ENCODE measurements at regions of chr2 and their contacts with region 1.

Region 1: DNA sequence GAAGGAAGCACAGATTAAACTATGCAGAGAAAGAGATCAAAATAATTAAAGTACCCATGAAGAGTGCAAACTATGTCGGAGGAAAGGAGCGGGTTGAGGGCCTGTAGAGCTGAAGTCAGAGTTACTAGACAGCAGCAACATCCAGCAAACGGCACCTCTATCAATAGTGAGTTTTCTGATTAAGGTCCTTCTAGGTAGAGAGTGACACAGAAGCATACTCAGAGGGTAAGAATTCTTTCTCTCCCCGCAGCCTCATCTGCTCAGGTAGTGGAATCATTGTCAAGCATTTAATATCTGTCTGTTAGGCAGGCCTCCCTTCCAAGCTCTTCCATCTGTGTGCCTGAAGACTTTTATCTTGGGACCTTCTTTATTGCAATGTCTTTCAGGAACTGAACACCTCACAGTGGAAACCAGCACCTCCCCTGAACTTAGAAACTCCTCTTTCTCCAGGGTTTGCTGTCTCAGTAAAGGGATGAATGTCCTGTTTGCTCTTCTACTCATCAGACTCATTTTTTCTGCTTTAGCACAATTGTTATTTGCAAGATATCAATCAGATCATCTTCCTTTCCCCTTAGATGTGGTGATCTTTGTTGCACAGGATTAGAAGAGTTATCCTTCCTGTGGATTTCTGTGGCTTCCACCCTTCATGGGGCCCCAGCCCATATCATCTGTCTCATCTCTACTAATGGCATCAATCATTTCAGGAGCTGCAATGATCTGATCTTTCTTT is 28.8 kb downstream of the SP140 start:
- DNase-seq: peak in 8 of 9 donors; percentile 28 to 70 (median 51)
- ATAC-seq: peak; percentile 81
- H3K4me3 ChIP-seq: peak overlapping the region; percentile 5
- H3K4me3 Mint-ChIP-seq: no peak overlapping the region
- H3K27ac ChIP-seq: no peak overlapping the region
- H3K27ac Mint-ChIP-seq: no peak overlapping the region
- H3K4me1 ChIP-seq: peaks cover 18 to 24% of the 10 kb centered on the region in 2 donors
- H3K4me1 Mint-ChIP-seq: peaks cover 0 to 22% (median 9%) of the 10 kb centered on the region in 7 donors
- H3K27me3 ChIP-seq: no peaks in the 10 kb centered on the region
- H3K27me3 Mint-ChIP-seq: no peaks in the 10 kb centered on the region

Region 2: GRCh38 chr2:230225486-230225885 is 28.8 kb before region 1 on chr2 and contains the start of gene SP140:
- CTCF ChIA-PET with region 1: interaction called, 3 read pairs
- POLR2A ChIA-PET with region 1: no interaction called
- intact Hi-C with region 1: loop called (anchors 1 to 2 kb)
- DNase-seq: peak; percentile 34 to 91 (median 77)
- ATAC-seq: peak; percentile 97
- H3K4me3 ChIP-seq: peak within 1 kb of the TSS; percentile 70
- H3K4me3 Mint-ChIP-seq: peak within 1 kb of the TSS; percentile 82 to 94 (median 87)
- H3K27ac ChIP-seq: peak within 1 kb of the TSS; percentile 79
- H3K27ac Mint-ChIP-seq: peak within 1 kb of the TSS; percentile 95 to 100 (median 98)
- H3K4me1 ChIP-seq: peaks cover 21 to 39% of the 10 kb centered on the region in 2 donors
- H3K4me1 Mint-ChIP-seq: peaks cover 28 to 79% (median 65%) of the 10 kb centered on the region in 7 donors
- H3K27me3 ChIP-seq: no peaks in the 10 kb centered on the region
- H3K27me3 Mint-ChIP-seq: no peaks in the 10 kb centered on the region
- total RNA-seq, gene SP140: 34.5 to 120 (median 45.2) TPM

Region 3: DNA sequence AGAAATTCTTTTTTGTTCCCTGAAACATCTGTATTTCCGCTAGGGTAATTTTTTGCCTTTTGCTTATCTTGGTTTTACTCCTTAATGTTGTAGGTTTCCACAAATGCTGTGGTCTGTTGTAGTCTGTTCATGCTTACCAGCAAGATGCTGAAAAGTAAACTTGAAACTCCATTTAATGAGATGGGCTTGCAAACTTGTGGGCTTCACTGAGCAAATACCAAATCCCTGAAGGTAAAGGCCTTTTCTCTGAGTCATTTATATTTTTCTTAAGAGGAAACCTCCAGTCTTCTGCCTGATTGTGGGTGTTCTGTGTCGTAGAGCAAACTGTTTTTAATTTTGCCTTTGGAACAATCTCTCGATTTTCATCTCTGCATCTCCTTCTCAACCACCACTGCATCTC is 19.5 kb before region 1 on chr2:
- CTCF ChIA-PET with region 1: no interaction called
- POLR2A ChIA-PET with region 1: no interaction called
- intact Hi-C with region 1: loop called in 1 of 2 experiments (anchors 2 kb)
- DNase-seq: no peak
- ATAC-seq: no peak
- H3K4me3 ChIP-seq: no peak overlapping the region
- H3K4me3 Mint-ChIP-seq: peak overlapping the region in 1 of 10 donors; percentile 69
- H3K27ac ChIP-seq: no peak overlapping the region
- H3K27ac Mint-ChIP-seq: peak overlapping the region in 5 of 9 donors; percentile 11 to 80 (median 17)
- H3K4me1 ChIP-seq: peaks cover 0 to 15% of the 10 kb centered on the region in 2 donors
- H3K4me1 Mint-ChIP-seq: peaks cover 0 to 45% (median 36%) of the 10 kb centered on the region in 7 donors
- H3K27me3 ChIP-seq: no peaks in the 10 kb centered on the region
- H3K27me3 Mint-ChIP-seq: no peaks in the 10 kb centered on the region

Region 4: DNA sequence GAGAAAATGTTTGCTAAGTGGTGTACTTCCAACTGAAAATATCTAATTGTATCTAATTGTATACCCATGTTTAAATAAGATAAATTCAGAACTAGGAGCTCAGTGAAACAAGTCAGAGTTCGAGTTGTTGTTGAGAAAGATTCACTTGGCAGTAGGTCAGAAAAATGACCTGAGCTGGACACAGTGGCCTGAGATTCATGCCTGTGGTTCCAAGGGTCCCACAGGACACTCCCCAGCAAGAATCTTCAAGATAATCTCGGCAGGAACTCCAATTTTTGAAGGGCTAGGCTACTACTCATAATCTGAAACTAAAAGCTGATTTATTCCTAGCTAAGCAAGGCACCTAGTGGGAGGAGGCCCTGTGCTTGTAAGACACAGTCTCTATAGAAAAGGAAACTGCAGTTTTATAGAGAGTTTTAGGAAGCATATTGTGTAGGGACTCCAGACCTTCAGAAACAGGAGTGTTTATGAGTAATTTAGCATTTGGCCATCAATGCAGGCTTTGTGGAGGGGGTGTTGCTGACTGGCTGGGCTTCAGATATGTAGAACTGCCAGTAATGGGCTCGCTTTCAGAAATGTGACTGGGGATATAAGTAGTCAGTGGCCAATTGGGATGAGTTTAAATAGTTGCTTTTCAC is 14.4 kb after region 1 on chr2:
- CTCF ChIA-PET with region 1: no interaction called
- POLR2A ChIA-PET with region 1: no interaction called
- intact Hi-C with region 1: no loop called
- DNase-seq: no peak
- ATAC-seq: no peak
- H3K4me3 ChIP-seq: no peak overlapping the region
- H3K4me3 Mint-ChIP-seq: peak overlapping the region in 1 of 10 donors; percentile 70
- H3K27ac ChIP-seq: no peak overlapping the region
- H3K27ac Mint-ChIP-seq: peak overlapping the region in 1 of 9 donors; percentile 73
- H3K4me1 ChIP-seq: no peaks in the 10 kb centered on the region
- H3K4me1 Mint-ChIP-seq: peaks cover 13 to 58% (median 18%) of the 10 kb centered on the region in 7 donors
- H3K27me3 ChIP-seq: no peaks in the 10 kb centered on the region
- H3K27me3 Mint-ChIP-seq: no peaks in the 10 kb centered on the region

Measured in naive thymus-derived CD4-positive, alpha-beta T cell (primary cell).